AG04450 (cell line): ENCODE measurements at regions of chr14 and their contacts with region 1.

Region 1: GRCh38 chr14:69142101-69142500 is 10.8 kb downstream of the DCAF5 start:
- DNase-seq: no peak
- H3K4me3 ChIP-seq: no peak overlapping the region
- H3K27ac ChIP-seq: no peak overlapping the region
- H3K27me3 ChIP-seq: no peaks in the 10 kb centered on the region
- CTCF ChIP-seq: no peak

Region 2: DNA sequence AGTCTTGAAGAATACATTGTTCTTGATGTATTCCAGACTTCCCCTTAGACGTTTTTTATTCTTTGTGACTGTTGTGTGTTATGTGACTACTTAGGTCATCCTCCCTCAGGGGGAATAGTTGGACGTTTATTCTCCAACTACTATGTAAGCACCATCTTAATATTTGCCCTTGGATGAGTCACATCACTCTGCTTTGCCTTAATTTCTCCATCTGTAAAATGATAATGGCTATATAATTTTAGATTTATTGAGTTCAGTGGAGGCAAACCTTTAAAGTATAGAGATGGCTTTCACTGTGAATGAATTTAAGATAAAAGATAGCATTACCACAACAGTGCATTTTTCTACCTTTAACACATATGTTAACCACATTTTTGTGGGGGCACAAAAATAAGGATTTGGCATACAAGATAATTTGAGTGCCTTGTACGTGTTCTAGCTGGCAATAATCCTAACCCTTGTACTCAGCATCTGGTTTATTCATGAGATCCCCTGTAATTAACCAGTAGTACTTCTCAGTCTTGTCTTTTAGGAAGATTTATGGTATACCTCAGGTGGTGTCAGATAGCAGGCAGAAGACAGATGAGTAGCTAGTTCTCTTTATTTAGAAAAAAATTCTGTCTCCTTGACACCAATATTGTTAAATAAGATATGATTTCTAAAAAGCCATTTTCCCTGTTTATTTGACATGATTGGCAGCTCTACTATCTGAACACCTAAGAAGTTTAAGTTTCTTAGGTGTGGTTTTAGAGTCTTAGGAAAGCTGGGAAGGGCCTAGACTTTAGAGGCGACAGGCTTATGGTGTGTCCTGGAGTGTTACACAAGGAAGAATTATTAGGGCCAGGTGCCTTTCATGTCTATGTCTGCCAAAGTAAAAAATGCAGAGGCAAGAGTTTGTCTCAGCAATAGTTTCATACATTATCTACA is 1170.2 kb before region 1 on chr14:
- CTCF ChIA-PET with region 1: no interaction called
- POLR2A ChIA-PET with region 1: interaction called, 10 read pairs
- DNase-seq: no peak
- H3K4me3 ChIP-seq: no peak overlapping the region
- H3K27ac ChIP-seq: no peak overlapping the region
- H3K27me3 ChIP-seq: no peaks in the 10 kb centered on the region
- CTCF ChIP-seq: no peak

Region 3: GRCh38 chr14:69226178-69226577 is 84.1 kb after region 1 on chr14:
- CTCF ChIA-PET with region 1: no interaction called
- POLR2A ChIA-PET with region 1: no interaction called
- DNase-seq: no peak
- H3K4me3 ChIP-seq: no peak overlapping the region
- H3K27ac ChIP-seq: no peak overlapping the region
- H3K27me3 ChIP-seq: no peaks in the 10 kb centered on the region
- CTCF ChIP-seq: no peak